ENCODE measurements at regions of chr2 and their contacts with region 1.

Region 1: GRCh38 chr2:28958689-28959088 is 22.4 kb upstream of the TOGARAM2 start:
- DNase-seq: peak; percentile 50
- ATAC-seq: peak; percentile 80
- H3K4me3 Mint-ChIP-seq: no peak overlapping the region
- H3K27ac Mint-ChIP-seq: no peak overlapping the region
- H3K4me1 Mint-ChIP-seq: no peaks in the 10 kb centered on the region
- H3K27me3 Mint-ChIP-seq: no peaks in the 10 kb centered on the region

Region 2: DNA sequence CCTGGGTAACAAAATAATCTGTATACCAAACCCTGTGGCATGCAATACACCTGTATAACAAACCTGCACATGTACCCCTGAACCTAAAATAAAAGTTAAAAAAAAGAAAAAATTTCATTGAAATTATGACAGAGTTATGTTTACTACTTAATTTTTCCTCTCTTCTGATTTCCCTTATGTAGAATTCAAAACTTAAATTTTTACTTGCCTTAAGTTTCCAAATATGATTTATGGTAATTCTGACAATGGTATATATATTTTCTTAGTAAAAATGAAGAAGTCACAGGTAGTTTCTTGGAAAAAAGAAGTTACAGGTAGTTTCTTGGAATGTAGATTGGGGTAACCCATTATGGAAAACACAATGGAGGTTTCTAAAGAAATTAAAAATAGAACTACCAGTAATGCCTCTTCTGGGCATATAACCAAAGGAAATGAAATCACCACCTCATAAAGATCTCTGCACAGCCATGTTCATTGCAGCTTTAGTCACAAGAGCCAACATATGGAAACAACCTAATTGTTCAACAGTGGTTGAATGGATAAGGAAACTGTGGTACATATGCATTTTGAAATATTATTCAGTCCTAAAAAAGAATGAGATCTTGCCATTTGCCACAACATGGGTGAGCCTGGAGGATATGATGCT is 903.2 kb before region 1 on chr2:
- CTCF ChIA-PET with region 1: no interaction called
- POLR2A ChIA-PET with region 1: no interaction called
- intact Hi-C with region 1: no loop called
- DNase-seq: no peak
- ATAC-seq: peak; percentile 95
- H3K4me3 Mint-ChIP-seq: no peak overlapping the region
- H3K27ac Mint-ChIP-seq: peak overlapping the region; percentile 56
- H3K4me1 Mint-ChIP-seq: peaks cover 20% of the 10 kb centered on the region
- H3K27me3 Mint-ChIP-seq: no peaks in the 10 kb centered on the region

Region 3: DNA sequence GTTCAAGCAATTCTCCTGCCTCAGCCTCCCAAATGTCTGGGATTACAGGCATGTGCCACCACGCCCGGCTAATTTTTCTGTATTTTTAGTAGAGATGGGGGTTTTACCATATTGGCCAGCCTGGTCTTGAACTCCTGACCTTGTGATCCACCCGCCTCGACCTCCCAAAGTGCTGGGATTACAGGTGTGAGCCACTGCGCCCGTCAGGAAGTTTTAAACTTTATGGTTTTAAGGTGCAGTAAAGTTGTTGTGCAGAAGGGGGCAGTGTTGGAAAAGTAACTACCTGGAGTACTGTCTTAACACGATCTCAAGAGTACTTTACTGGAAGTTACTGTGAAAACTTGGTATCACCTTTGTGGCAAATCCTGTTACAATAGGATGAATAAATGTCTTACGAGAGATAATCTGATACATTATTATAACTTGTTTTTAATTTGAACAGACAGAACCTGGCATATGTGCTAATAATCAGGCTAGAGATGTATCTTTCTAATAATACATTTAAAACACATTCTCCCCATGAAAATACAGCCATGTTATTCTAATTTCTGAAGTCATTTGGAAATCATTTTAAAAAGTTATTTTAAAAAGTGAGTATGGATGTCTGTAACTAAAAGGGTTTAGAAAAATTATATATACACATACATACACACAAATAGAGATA is 137.3 kb before region 1 on chr2:
- CTCF ChIA-PET with region 1: interaction called, 3 read pairs
- POLR2A ChIA-PET with region 1: no interaction called
- intact Hi-C with region 1: loop called (anchors 1 to 5 kb)
- DNase-seq: peak; percentile 72
- ATAC-seq: peak; percentile 88
- H3K4me3 Mint-ChIP-seq: no peak overlapping the region
- H3K27ac Mint-ChIP-seq: no peak overlapping the region
- H3K4me1 Mint-ChIP-seq: peaks cover 7% of the 10 kb centered on the region
- H3K27me3 Mint-ChIP-seq: peaks cover 2% of the 10 kb centered on the region

Region 4: GRCh38 chr2:29014811-29015421 is 56.2 kb after region 1 on chr2:
- CTCF ChIA-PET with region 1: interaction called, 4 read pairs
- POLR2A ChIA-PET with region 1: no interaction called
- intact Hi-C with region 1: loop called (anchors 2 to 5 kb)
- DNase-seq: peak; percentile 80
- ATAC-seq: peak; percentile 82
- H3K4me3 Mint-ChIP-seq: peak overlapping the region; percentile 75
- H3K27ac Mint-ChIP-seq: peak overlapping the region; percentile 94
- H3K4me1 Mint-ChIP-seq: peaks cover 78% of the 10 kb centered on the region
- H3K27me3 Mint-ChIP-seq: no peaks in the 10 kb centered on the region

Region 5: DNA sequence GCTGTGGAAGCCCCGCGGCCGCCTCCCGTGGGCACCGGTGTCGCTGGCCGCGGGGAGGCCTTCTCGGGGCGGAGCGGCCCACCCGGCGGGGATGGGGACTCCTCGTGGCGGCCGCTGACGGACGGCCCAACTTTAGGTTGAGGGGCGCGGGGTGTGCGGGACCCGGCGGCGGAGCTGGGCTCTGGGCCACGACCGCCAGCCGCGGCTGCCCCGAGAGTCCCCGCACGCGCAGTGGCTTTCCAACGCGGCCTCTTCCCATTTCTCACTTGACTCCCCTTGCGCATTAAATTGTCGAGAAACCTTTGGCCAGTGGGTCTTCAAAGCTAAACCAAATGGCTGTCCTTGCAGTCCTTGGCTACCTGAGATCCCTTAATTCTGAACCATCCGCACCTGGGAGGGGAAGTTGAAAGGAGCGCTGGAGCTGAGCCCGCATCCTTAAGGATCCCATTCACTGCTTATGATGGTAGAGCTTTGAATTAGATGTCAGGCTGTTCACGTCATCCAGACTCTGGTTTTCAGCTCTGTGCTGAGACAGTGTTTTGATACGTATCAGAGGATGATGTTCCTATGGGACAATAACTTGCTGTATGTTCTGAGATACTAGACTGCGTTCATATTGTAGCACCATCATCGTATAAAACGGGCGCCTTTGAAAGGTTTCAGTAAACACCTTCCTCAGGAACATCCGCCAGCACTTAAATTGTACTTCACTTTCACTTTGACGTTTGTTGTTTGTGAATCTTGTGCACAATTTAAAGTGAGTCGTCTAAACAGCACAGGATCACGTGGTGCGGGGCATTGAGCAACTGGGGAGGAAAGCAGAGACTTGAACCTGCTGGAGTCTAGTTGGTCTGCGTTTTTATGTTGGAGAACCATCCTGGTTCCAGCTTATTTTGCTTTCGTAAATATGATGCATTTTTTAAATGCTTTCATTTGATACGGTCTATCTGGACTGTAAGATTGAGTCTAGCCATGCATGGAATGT is 157.4 kb after region 1 on chr2:
- CTCF ChIA-PET with region 1: no interaction called
- POLR2A ChIA-PET with region 1: no interaction called
- intact Hi-C with region 1: loop called in 1 of 2 experiments (anchors 10 kb)
- DNase-seq: peak; percentile 88
- ATAC-seq: peak; percentile 74
- H3K4me3 Mint-ChIP-seq: peak overlapping the region; percentile 90
- H3K27ac Mint-ChIP-seq: peak overlapping the region; percentile 96
- H3K4me1 Mint-ChIP-seq: peaks cover 43% of the 10 kb centered on the region
- H3K27me3 Mint-ChIP-seq: peaks cover 5% of the 10 kb centered on the region

Region 6: GRCh38 chr2:29196792-29197788 is 238.4 kb after region 1 on chr2:
- CTCF ChIA-PET with region 1: interaction called, 4 read pairs
- POLR2A ChIA-PET with region 1: no interaction called
- intact Hi-C with region 1: loop called (anchors 1 kb)
- DNase-seq: peak; percentile 89
- ATAC-seq: peak; percentile 98
- H3K4me3 Mint-ChIP-seq: no peak overlapping the region
- H3K27ac Mint-ChIP-seq: no peak overlapping the region
- H3K4me1 Mint-ChIP-seq: peaks cover 3% of the 10 kb centered on the region
- H3K27me3 Mint-ChIP-seq: no peaks in the 10 kb centered on the region

Region 7: GRCh38 chr2:29841386-29842004 is 882.8 kb after region 1 on chr2:
- CTCF ChIA-PET with region 1: no interaction called
- POLR2A ChIA-PET with region 1: no interaction called
- intact Hi-C with region 1: loop called in 1 of 2 experiments (anchors 10 kb)
- DNase-seq: peak; percentile 36
- ATAC-seq: no peak
- H3K4me3 Mint-ChIP-seq: no peak overlapping the region
- H3K27ac Mint-ChIP-seq: no peak overlapping the region
- H3K4me1 Mint-ChIP-seq: no peaks in the 10 kb centered on the region
- H3K27me3 Mint-ChIP-seq: peaks cover 4% of the 10 kb centered on the region

Region 8: GRCh38 chr2:30072250-30072842 is 1113.7 kb after region 1 on chr2:
- CTCF ChIA-PET with region 1: no interaction called
- POLR2A ChIA-PET with region 1: no interaction called
- intact Hi-C with region 1: loop called in 1 of 2 experiments (anchors 5 kb)
- DNase-seq: peak; percentile 83
- ATAC-seq: peak; percentile 92
- H3K4me3 Mint-ChIP-seq: no peak overlapping the region
- H3K27ac Mint-ChIP-seq: no peak overlapping the region
- H3K4me1 Mint-ChIP-seq: no peaks in the 10 kb centered on the region
- H3K27me3 Mint-ChIP-seq: peaks cover 25% of the 10 kb centered on the region